ENCODE measurements at regions of chr19 and their contacts with region 1.

Region 1: DNA sequence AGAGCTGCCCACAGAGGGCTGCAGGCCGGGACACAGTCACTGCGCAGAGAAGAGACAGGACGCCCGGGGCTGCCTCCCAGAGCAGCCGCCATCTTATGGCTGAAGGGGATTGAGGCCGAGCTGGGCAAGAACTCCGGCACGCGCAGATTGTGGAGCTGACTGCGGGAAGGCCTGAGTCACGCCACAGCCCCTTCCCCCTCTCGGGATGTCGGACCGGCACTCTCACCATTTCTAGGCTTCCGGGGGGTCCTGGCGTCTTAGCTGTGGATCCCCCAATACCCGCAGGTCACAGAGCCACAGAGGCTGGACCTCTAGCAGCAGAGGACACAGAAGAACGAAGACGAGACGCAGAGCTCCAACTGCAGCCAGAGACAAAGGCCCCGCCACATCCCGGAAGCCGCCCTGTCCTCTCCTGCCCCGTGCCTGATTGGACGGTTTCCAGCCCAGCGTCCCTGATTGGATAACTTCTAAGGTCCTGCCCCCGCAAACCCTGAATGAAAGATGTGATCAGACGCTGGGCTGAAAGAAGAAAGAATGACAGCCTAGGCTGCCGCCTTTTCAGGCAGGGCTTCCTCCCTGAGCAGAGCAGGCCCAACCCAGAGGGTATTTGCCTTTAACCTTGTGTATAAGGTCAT is at the start of gene ZNF43:
- DNase-seq: peak; percentile 88 to 94
- ATAC-seq: peak; percentile 98
- H3K4me3 ChIP-seq: peak within 1 kb of the TSS; percentile 69 to 78 (median 72)
- H3K27ac ChIP-seq: peak within 1 kb of the TSS; percentile 78 to 84 (median 81)
- H3K4me1 ChIP-seq: peaks cover 0 to 4% of the 10 kb centered on the region in 2 donors
- H3K27me3 ChIP-seq: no peaks in the 10 kb centered on the region
- CTCF ChIP-seq: no peak
- POLR2A ChIP-seq: peak; percentile 55 to 81
- total RNA-seq, gene ZNF43: 1.2 to 5.4 (median 3.0) TPM

Region 2: GRCh38 chr19:21396893-21397572 is 438.9 kb before region 1 on chr19 and contains the start of gene ZNF493:
- in situ Hi-C with region 1: loop called in 1 of 4 experiments (anchors 10 kb)
- intact Hi-C with region 1: no loop called
- DNase-seq: peak; percentile 89 to 94
- ATAC-seq: peak; percentile 100
- H3K4me3 ChIP-seq: peak within 1 kb of the TSS; percentile 66 to 87 (median 83)
- H3K27ac ChIP-seq: peak within 1 kb of the TSS; percentile 82 to 88 (median 84)
- H3K4me1 ChIP-seq: peaks cover 13 to 20% of the 10 kb centered on the region in 2 donors
- H3K27me3 ChIP-seq: no peaks in the 10 kb centered on the region
- CTCF ChIP-seq: no peak
- POLR2A ChIP-seq: peak; percentile 53 to 79
- total RNA-seq, gene ZNF493: 2.2 to 6.5 (median 3.1) TPM

Region 3: DNA sequence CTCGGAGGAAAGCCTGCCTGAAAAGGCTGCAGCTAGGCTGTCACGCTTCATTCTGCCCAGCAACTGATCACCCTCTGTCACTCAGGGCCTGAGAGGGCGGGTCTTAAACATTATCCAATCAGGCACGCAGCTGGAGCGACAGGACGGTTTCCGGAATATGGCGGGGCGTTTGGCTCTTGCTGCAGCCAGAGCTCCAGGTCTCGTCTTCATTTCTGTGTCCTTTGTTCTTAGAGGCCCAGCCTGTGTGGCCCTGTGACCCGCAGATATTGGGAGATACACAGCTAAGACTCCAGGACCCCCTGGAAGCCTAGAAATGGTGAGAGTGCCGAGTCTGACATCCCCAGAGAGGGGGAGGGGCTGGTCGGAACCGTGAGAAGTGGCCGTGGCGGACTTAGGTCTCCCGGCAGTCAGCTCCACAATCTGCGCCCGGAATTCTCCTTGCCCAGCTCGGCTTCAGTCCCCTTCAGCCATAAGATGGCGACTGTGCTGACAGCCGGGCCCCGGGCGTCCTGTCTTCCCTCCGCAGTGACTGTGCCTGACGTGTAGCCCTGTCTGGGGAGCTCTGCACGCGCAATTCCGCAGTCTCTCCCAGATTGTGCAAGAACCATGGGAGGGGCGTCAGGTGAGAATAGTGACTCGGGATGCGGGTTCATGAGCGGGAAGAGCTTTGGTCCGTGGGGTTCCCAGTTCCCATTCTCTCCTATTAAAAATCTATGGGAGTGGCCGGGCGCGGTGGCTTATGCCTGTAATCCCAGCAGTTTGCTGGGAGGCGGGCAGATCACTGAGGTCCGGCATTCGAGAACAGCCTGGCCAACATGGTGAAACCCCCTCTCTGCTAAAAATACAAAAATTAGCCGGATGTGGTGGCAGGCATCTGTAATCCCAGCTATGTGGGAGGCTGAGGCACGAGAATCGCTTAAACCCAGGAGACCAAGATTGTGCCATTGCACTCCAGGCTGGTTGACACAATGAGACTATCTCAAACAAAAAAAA is 330.2 kb before region 1 on chr19 and contains the start of gene ZNF429:
- in situ Hi-C with region 1: no loop called
- intact Hi-C with region 1: loop called (anchors 10 kb)
- DNase-seq: peak; percentile 90 to 94
- ATAC-seq: peak; percentile 99 to 100
- H3K4me3 ChIP-seq: peak within 1 kb of the TSS; percentile 71 to 87 (median 78)
- H3K27ac ChIP-seq: peak within 1 kb of the TSS; percentile 88 to 94 (median 92)
- H3K4me1 ChIP-seq: peaks cover 14 to 18% of the 10 kb centered on the region in 2 donors
- H3K27me3 ChIP-seq: no peaks in the 10 kb centered on the region
- CTCF ChIP-seq: no peak
- POLR2A ChIP-seq: peak; percentile 78 to 85
- total RNA-seq, gene ZNF429: 3.4 to 11.1 (median 7.4) TPM

Region 4: DNA sequence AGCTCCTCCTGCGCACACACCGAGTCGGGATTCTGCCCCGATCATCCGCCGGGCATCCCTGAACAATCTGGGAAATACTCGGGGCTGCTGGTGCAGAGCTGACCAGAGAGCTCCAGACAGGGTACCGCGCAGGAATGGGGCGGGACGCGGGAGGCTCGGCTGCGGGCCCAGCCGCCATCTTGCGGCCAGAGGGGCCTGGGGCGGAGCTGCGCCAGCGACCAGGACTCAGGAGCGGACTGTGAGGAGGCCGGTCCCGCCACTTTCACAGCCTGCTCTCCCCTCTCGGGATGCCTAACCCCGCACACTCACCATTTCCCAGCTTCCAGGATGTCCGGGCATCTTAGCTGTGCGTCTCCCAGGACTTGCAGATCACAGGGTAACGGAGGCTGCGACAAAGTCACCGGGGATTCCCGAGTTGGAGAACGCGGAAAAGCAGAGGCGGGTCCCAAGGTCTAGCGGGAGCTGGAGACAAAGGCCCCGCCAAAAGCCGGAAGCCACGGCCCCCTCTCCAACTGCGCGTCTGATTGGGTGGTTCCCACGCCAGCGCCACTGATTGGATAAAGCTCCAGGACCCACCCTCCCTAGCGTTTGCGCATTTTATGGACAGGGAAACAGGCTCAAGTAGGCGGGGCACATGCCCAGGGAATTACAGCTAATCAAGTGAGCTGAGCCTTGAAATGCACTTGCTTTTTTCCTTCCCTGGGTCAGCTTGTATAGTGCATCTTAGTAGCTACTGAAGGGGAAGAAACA is 15.8 kb after region 1 on chr19:
- in situ Hi-C with region 1: no loop called
- intact Hi-C with region 1: loop called (anchors 1 kb)
- DNase-seq: peak; percentile 83 to 85
- ATAC-seq: peak; percentile 93 to 98
- H3K4me3 ChIP-seq: peak overlapping the region; percentile 50 to 84 (median 70)
- H3K27ac ChIP-seq: peak overlapping the region; percentile 40 to 82 (median 64)
- H3K4me1 ChIP-seq: no peaks in the 10 kb centered on the region
- H3K27me3 ChIP-seq: no peaks in the 10 kb centered on the region
- CTCF ChIP-seq: no peak
- POLR2A ChIP-seq: no peak

Region 5: GRCh38 chr19:21921691-21922180 is 85.8 kb after region 1 on chr19:
- in situ Hi-C with region 1: no loop called
- intact Hi-C with region 1: no loop called
- DNase-seq: no peak
- ATAC-seq: no peak
- H3K4me3 ChIP-seq: no peak overlapping the region
- H3K27ac ChIP-seq: no peak overlapping the region
- H3K4me1 ChIP-seq: no peaks in the 10 kb centered on the region
- H3K27me3 ChIP-seq: no peaks in the 10 kb centered on the region
- CTCF ChIP-seq: no peak
- POLR2A ChIP-seq: no peak

Measured in gastrocnemius medialis (tissue), 4 donors.